ENCODE measurements at regions of chr13 and their contacts with region 1.

Region 1: DNA sequence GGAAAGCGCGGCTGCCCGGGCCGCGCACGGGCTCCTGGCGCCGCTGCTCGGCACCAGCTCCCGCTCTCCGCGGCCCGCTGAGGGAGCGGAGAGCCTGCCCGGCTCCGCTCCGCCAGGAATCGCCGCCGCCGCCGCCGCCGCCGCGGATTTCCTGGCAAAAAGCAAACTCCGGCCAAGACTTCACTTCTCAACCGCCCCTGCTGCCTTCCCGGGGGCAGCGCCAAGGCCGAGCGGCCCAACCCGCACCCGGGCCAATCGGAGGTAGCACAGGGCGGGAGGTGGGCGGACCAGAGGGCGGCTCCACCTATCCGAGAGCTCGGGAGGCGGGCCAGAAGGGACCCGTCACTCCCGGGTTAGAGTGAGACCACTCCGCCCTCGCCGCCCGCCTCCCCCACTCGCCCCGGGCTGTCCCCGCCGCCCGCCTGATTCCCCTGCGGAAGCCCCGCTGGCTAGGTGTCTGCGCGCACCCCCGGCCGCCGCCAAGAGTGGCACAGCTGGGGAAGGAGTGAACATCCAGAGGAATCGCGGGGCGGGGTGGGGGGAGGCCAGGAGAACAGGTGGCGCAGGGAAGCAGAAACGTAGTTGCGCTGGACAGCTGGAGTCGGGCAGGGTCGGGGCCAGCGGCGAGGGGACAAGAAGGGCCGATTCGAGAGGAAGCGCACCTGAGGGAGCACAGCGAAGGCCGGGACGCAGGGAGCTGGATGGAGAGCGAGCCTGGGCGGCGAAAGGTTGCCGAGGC is at the start of gene LNX2:
- DNase-seq: peak; percentile 96 to 98
- ATAC-seq: peak; percentile 85 to 97 (median 87)
- H3K4me3 ChIP-seq: peak within 1 kb of the TSS; percentile 96
- H3K4me3 Mint-ChIP-seq: peak within 1 kb of the TSS; percentile 91
- H3K27ac ChIP-seq: peak within 1 kb of the TSS; percentile 97
- H3K27ac Mint-ChIP-seq: peak within 1 kb of the TSS; percentile 86 to 92
- H3K4me1 ChIP-seq: peaks cover 27% of the 10 kb centered on the region
- H3K4me1 Mint-ChIP-seq: peaks cover 46 to 69% of the 10 kb centered on the region in 2 donors
- H3K27me3 ChIP-seq: no peaks in the 10 kb centered on the region
- H3K27me3 Mint-ChIP-seq: no peaks in the 10 kb centered on the region
- CTCF ChIP-seq: no peak
- total RNA-seq, gene LNX2: 4.5 to 6.6 (median 5.0) TPM

Region 2: GRCh38 chr13:27171827-27172494 is 448.6 kb before region 1 on chr13:
- intact Hi-C with region 1: loop called (anchors 5 kb)
- DNase-seq: peak; percentile 93 to 96
- ATAC-seq: peak; percentile 86 to 97 (median 91)
- H3K4me3 ChIP-seq: peak overlapping the region; percentile 78
- H3K4me3 Mint-ChIP-seq: peak overlapping the region; percentile 94
- H3K27ac ChIP-seq: peak overlapping the region; percentile 96
- H3K27ac Mint-ChIP-seq: peak overlapping the region; percentile 92 to 97
- H3K4me1 ChIP-seq: peaks cover 19% of the 10 kb centered on the region
- H3K4me1 Mint-ChIP-seq: peaks cover 36 to 43% of the 10 kb centered on the region in 2 donors
- H3K27me3 ChIP-seq: no peaks in the 10 kb centered on the region
- H3K27me3 Mint-ChIP-seq: no peaks in the 10 kb centered on the region
- CTCF ChIP-seq: no peak

Region 3: DNA sequence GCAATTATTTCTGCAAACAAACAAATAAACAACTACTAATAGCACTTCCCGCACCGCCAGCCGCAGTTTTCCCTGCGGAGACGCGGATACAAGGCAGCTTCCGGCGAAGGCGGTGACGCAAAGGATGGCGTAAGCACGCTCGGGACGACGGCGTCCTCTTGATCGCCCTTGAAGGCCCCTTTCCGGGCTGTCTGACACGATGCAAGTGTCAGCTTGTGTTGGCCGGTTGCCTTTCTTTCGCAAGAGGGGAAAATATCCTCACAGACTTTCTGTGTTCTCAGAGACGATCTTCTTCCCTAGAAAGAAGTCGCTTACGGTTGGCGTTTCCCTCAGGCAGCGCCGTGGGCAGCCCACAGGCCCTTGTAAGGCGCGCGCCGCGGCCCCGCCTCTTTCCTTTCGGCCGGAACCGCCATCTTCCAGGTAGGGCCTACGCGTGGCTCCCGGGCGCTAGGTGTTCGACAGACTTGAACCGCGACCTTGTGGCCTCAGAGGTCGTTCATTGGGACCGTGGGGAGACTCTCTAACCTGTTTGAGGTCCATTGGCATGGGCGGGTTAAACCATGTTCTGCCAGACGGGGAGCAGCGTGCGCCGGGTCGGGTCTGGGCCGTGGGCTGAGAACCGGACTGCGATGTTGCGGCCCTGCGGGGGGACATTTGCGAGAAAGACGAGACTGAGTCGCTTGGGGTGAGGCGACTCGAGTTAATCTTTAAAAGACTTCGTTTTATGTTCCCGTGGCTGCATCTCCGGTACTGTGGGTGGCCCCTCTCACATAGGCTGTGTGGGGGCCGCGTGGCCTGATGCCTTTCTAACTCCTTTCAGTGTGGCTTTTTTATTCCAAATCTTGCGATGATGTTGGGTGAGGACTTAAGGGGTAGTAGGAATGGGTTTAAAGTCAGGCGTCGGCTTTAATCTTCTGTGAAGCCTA is 369.1 kb before region 1 on chr13 and contains the start of gene RPL21:
- intact Hi-C with region 1: loop called (anchors 1 kb)
- DNase-seq: peak; percentile 91 to 98
- ATAC-seq: peak; percentile 91 to 96 (median 93)
- H3K4me3 ChIP-seq: peak within 1 kb of the TSS; percentile 99
- H3K4me3 Mint-ChIP-seq: peak within 1 kb of the TSS; percentile 97
- H3K27ac ChIP-seq: peak within 1 kb of the TSS; percentile 100
- H3K27ac Mint-ChIP-seq: peak within 1 kb of the TSS; percentile 96 to 100
- H3K4me1 ChIP-seq: peaks cover 7% of the 10 kb centered on the region
- H3K4me1 Mint-ChIP-seq: peaks cover 36 to 50% of the 10 kb centered on the region in 2 donors
- H3K27me3 ChIP-seq: no peaks in the 10 kb centered on the region
- H3K27me3 Mint-ChIP-seq: no peaks in the 10 kb centered on the region
- CTCF ChIP-seq: no peak
- total RNA-seq, gene RPL21: 969 to 1,229 (median 1,130) TPM

Region 4: DNA sequence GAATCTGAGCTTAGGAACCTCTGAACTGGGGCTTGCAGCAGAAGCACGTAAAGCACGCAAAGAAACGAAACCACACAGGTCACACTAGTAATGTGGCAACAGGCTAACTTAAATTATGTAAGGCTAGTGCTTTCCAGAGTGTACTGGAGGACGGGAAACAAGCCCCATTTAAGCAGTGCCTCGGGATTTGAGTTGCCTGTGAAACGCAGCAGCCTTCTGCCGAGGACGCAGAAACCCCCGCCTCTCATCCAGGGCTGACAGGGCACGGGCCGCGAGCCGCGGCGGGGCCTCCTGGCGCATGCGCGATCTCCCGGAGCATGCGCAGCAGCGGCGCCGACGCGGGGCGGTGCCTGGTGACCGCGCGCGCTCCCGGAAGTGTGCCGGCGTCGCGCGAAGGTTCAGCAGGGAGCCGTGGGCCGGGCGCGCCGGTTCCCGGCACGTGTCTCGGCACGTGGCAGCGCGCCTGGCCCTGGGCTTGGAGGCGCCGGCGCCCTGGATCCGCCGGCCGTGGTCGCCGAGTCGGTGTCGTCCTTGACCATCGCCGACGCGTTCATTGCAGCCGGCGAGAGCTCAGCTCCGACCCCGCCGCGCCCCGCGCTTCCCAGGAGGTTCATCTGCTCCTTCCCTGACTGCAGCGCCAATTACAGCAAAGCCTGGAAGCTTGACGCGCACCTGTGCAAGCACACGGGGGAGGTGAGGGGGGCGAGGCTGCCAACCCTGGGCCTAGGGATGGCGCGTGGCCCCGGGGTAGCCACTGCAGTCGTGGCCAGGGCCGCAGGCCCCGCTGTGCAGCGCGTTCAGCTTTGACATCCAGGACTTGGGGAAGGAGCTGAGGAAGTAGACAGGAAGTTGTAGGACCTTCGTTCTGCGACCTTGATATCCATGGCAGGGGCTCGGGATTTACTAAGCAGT is 196.0 kb before region 1 on chr13 and contains the start of gene GTF3A:
- intact Hi-C with region 1: loop called (anchors 2 kb)
- DNase-seq: peak; percentile 91 to 96
- ATAC-seq: peak; percentile 64 to 83 (median 78)
- H3K4me3 ChIP-seq: peak within 1 kb of the TSS; percentile 83
- H3K4me3 Mint-ChIP-seq: peak within 1 kb of the TSS; percentile 87
- H3K27ac ChIP-seq: peak within 1 kb of the TSS; percentile 88
- H3K27ac Mint-ChIP-seq: peak within 1 kb of the TSS; percentile 92 to 94
- H3K4me1 ChIP-seq: peaks cover 48% of the 10 kb centered on the region
- H3K4me1 Mint-ChIP-seq: peaks cover 40 to 42% of the 10 kb centered on the region in 2 donors
- H3K27me3 ChIP-seq: no peaks in the 10 kb centered on the region
- H3K27me3 Mint-ChIP-seq: no peaks in the 10 kb centered on the region
- CTCF ChIP-seq: no peak
- total RNA-seq, gene GTF3A: 129 to 132 (median 130) TPM

Region 5: DNA sequence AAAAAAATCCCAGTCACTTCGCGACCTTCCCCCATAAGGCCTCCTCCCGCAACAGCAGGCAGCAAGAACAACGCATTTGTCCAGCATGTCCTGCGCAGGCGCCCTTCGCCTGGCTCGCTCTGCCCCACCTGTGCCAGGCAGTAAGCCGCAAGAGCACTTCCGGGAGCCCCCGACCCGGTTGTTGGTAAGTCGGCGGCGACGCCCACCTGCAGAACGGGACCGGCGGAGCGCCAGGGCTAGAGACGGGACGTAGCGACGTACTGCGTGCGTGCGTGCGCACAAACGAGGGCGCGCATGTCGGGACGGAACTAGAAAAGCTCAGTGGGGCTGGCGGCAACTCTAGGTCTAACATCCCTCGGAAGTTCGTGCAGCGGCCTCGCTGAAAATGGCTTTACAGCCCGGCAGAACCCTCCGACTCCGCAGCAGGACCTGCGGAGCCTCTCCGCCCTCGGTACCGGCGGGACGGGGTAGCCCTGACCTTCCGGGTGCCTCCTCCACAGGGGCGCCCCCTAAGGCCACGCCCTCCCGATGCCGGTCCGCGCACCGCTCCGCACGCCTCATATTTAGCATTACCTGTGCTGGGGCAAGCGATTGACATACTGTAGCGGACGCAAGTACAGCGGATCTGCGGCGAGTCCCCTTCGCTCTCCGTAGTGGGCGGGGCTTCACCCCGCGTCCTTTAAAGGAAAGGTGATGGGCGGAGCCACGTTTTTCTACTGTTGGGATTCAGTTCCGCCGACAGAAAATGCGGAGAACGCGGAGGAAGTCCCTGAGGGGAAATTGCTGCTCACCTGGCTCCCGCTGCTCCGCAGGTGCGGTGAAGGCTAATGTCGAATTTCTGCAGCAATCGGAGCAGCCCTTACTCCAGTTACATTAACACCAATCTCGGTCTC is 170.4 kb before region 1 on chr13 and contains the start of gene MTIF3:
- intact Hi-C with region 1: loop called (anchors 1 kb)
- DNase-seq: peak; percentile 87 to 99
- ATAC-seq: peak; percentile 81 to 93 (median 83)
- H3K4me3 ChIP-seq: peak within 1 kb of the TSS; percentile 84
- H3K4me3 Mint-ChIP-seq: peak within 1 kb of the TSS; percentile 95
- H3K27ac ChIP-seq: peak within 1 kb of the TSS; percentile 94
- H3K27ac Mint-ChIP-seq: peak within 1 kb of the TSS; percentile 97 to 98
- H3K4me1 ChIP-seq: peaks cover 20% of the 10 kb centered on the region
- H3K4me1 Mint-ChIP-seq: peaks cover 44 to 49% of the 10 kb centered on the region in 2 donors
- H3K27me3 ChIP-seq: no peaks in the 10 kb centered on the region
- H3K27me3 Mint-ChIP-seq: no peaks in the 10 kb centered on the region
- CTCF ChIP-seq: no peak
- total RNA-seq, gene MTIF3: 30.2 to 56.6 (median 36.8) TPM

Region 6: GRCh38 chr13:27559714-27560113 is 60.8 kb before region 1 on chr13:
- intact Hi-C with region 1: loop called (anchors 1 kb)
- DNase-seq: peak; percentile 40 to 66
- ATAC-seq: peak; percentile 94 to 99 (median 96)
- H3K4me3 ChIP-seq: no peak overlapping the region
- H3K4me3 Mint-ChIP-seq: peak overlapping the region; percentile 7
- H3K27ac ChIP-seq: no peak overlapping the region
- H3K27ac Mint-ChIP-seq: peak overlapping the region; percentile 70 to 84
- H3K4me1 ChIP-seq: peaks cover 4% of the 10 kb centered on the region
- H3K4me1 Mint-ChIP-seq: peaks cover 20 to 22% of the 10 kb centered on the region in 2 donors
- H3K27me3 ChIP-seq: no peaks in the 10 kb centered on the region
- H3K27me3 Mint-ChIP-seq: no peaks in the 10 kb centered on the region
- CTCF ChIP-seq: no peak

Region 7: DNA sequence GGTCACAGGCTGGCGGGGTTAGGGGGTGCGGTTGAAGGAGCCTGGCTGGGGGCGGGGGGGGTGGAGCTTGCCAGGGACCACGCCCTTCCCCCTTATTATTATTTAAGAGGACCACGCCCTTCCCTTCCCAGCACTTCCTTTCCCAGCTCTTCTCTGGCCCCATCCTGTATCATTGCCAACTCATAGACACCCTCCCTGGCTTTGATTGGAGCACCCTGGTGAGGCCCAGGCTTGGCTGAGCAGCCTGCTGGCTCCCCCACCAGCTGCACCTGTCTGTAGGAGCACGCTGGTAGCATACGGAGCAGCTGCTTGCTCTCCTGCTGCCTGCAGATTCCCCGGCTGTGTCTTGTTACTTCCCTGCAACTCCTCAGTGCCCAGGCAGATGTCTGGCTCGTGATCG is 236.7 kb after region 1 on chr13:
- intact Hi-C with region 1: no loop called
- DNase-seq: no peak
- ATAC-seq: no peak
- H3K4me3 ChIP-seq: no peak overlapping the region
- H3K4me3 Mint-ChIP-seq: no peak overlapping the region
- H3K27ac ChIP-seq: no peak overlapping the region
- H3K27ac Mint-ChIP-seq: no peak overlapping the region
- H3K4me1 ChIP-seq: no peaks in the 10 kb centered on the region
- H3K4me1 Mint-ChIP-seq: no peaks in the 10 kb centered on the region
- H3K27me3 ChIP-seq: no peaks in the 10 kb centered on the region
- H3K27me3 Mint-ChIP-seq: peaks cover 3 to 12% of the 10 kb centered on the region in 2 donors
- CTCF ChIP-seq: no peak

Measured in natural killer cell (primary cell).